ENCODE measurements at regions of chr4 and their contacts with region 1.

Region 1: DNA sequence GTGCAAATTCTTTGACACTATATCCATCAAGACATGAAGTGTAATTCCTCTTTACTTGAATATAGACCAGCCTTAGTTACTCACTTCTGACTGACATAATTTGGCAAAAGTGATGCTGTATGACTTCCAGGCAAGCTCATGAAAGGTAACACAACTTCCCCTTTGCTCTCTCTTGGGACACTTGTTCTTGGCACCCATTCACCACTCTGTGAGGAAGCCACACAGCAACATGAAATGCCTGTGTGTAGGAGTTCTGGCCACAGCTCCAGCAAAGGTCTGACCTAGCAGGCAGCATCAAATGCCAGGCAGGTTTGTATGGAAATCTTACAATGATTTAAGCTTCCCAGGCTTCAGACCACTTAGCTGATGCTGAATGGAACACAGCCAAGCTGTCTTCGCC is 280.3 kb downstream of the PDHA2 start:
- DNase-seq: no peak
- ATAC-seq: no peak
- H3K4me3 ChIP-seq: no peak overlapping the region
- H3K4me3 Mint-ChIP-seq: no peak overlapping the region
- H3K27ac ChIP-seq: no peak overlapping the region
- H3K27ac Mint-ChIP-seq: no peak overlapping the region
- H3K4me1 ChIP-seq: no peaks in the 10 kb centered on the region
- H3K4me1 Mint-ChIP-seq: no peaks in the 10 kb centered on the region
- H3K27me3 ChIP-seq: no peaks in the 10 kb centered on the region
- H3K27me3 Mint-ChIP-seq: no peaks in the 10 kb centered on the region
- CTCF ChIP-seq: no peak

Region 2: DNA sequence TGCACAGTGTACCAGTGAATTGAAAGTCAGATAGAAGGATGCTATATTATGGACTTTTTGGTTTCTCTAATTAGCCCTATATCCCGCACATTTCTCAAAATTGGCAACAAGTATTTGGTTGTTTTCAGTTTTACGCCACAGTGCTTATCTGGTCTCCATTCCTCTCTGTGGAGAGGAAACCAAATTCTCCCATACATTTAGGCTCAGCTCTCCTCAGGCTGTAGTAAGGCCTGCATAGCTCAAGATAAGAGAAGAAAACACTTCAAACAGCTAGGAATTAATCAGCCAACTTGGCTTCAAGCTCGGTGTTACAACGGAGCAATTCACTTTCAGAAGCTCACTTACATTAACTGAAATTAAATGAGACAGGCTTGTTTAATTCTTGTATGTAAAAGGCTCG is 17.1 kb before region 1 on chr4:
- CTCF ChIA-PET with region 1: no interaction called
- POLR2A ChIA-PET with region 1: no interaction called
- intact Hi-C with region 1: no loop called
- DNase-seq: no peak
- ATAC-seq: no peak
- H3K4me3 ChIP-seq: no peak overlapping the region
- H3K4me3 Mint-ChIP-seq: no peak overlapping the region
- H3K27ac ChIP-seq: no peak overlapping the region
- H3K27ac Mint-ChIP-seq: no peak overlapping the region
- H3K4me1 ChIP-seq: no peaks in the 10 kb centered on the region
- H3K4me1 Mint-ChIP-seq: no peaks in the 10 kb centered on the region
- H3K27me3 ChIP-seq: no peaks in the 10 kb centered on the region
- H3K27me3 Mint-ChIP-seq: no peaks in the 10 kb centered on the region
- CTCF ChIP-seq: no peak

Region 3: DNA sequence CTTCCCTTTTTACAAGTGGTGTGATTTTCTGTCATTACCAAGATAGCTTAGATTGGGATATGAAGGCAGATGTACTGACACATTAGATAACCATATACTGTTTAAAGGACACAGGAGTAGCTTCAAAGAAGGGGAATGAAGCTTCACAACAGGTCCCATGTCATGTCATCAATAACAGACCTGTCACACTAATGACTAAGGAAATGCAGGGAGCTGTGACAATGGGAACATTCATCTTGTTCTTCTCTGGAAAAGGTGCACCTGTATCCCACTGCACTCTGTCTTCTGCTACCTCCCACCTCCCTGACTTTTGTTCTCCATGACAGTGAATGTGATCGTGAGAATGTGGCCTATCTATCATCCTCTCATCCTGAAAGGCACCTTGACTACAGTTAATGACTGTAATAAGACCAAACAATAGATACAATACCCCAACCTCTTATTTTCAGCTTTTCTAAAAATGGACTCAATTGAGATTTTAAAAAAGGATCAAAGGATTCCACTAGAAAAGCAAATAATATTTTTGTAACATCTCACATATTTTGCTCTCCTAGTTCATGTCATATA is 1550.6 kb after region 1 on chr4:
- CTCF ChIA-PET with region 1: no interaction called
- POLR2A ChIA-PET with region 1: no interaction called
- intact Hi-C with region 1: loop called in 1 of 2 experiments (anchors 5 kb)
- DNase-seq: no peak
- ATAC-seq: no peak
- H3K4me3 ChIP-seq: no peak overlapping the region
- H3K4me3 Mint-ChIP-seq: no peak overlapping the region
- H3K27ac ChIP-seq: no peak overlapping the region
- H3K27ac Mint-ChIP-seq: no peak overlapping the region
- H3K4me1 ChIP-seq: no peaks in the 10 kb centered on the region
- H3K4me1 Mint-ChIP-seq: no peaks in the 10 kb centered on the region
- H3K27me3 ChIP-seq: no peaks in the 10 kb centered on the region
- H3K27me3 Mint-ChIP-seq: no peaks in the 10 kb centered on the region
- CTCF ChIP-seq: no peak